ENCODE measurements at regions of chr12 and their contacts with region 1.

Region 1: DNA sequence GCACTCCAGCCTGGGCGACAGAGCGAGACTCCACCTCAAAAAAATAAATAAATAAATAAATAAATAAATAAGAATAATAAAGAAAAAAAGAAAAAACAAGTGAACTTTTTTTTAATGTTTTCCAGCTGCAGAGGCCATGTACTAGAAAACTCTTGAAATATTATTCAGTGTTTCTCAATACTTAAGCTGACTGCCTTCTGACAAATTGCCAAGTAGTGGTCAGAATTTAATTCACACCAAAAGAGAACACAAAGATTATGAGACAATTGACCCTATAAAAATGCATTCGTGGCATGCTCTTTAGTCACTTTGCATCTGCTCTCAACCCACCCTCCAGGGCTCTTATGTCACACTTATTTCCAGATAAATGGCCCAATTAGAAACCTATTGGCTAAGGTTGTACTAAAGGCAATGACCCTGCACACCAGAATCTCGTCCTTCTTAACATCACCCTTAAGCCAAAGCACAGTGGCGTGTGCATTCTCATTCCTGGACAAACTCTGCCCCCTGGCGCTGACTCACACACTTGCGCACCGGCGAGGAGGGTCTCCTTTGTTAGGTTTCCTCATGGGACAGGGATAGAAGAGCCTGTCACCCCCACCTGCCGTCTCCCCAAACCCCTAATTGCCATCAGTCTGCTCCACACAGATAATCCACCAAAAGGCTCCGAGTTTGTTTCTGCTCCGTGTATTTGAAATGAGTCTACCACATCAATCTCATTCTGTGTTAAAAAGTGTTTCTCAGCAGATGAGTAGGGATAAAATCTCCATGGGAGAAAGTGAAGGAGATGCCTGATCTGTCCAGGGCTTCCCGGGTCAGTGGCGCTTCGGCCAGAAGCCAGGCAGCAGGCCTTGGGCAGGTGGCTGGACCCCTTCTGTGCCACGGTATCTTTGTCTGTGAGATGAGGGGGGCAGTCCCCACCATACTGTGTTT is 73.1 kb upstream of the CEP83 start:
- DNase-seq: peak; percentile 67 to 89 (median 85)
- ATAC-seq: peak; percentile 87 to 89
- H3K4me3 ChIP-seq: no peak overlapping the region
- H3K27ac ChIP-seq: no peak overlapping the region
- H3K4me1 ChIP-seq: no peaks in the 10 kb centered on the region
- H3K27me3 ChIP-seq: no peaks in the 10 kb centered on the region

Region 2: GRCh38 chr12:94133964-94134795 is 398.6 kb before region 1 on chr12:
- intact Hi-C with region 1: loop called in 1 of 4 experiments (anchors 2 kb)
- DNase-seq: no peak
- ATAC-seq: peak; percentile 66 to 76
- H3K4me3 ChIP-seq: no peak overlapping the region
- H3K27ac ChIP-seq: no peak overlapping the region
- H3K4me1 ChIP-seq: no peaks in the 10 kb centered on the region
- H3K27me3 ChIP-seq: no peaks in the 10 kb centered on the region

Region 3: DNA sequence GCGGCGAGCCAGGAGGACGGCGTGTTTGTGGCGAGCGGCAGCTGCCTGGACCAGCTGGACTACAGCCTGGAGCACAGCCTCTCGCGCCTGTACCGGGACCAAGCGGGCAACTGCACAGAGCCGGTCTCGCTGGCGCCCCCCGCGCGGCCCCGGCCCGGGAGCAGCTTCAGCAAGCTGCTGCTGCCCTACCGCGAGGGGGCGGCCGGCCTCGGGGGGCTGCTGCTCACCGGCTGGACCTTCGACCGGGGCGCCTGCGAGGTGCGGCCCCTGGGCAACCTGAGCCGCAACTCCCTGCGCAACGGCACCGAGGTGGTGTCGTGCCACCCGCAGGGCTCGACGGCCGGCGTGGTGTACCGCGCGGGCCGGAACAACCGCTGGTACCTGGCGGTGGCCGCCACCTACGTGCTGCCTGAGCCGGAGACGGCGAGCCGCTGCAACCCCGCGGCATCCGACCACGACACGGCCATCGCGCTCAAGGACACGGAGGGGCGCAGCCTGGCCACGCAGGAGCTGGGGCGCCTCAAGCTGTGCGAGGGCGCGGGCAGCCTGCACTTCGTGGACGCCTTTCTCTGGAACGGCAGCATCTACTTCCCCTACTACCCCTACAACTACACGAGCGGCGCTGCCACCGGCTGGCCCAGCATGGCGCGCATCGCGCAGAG is 383.5 kb before region 1 on chr12:
- intact Hi-C with region 1: loop called in 3 of 4 experiments (anchors 5 kb)
- DNase-seq: peak; percentile 43 to 79 (median 74)
- ATAC-seq: peak; percentile 27 to 42
- H3K4me3 ChIP-seq: peak overlapping the region; percentile 88
- H3K27ac ChIP-seq: no peak overlapping the region
- H3K4me1 ChIP-seq: no peaks in the 10 kb centered on the region
- H3K27me3 ChIP-seq: no peaks in the 10 kb centered on the region

Region 4: DNA sequence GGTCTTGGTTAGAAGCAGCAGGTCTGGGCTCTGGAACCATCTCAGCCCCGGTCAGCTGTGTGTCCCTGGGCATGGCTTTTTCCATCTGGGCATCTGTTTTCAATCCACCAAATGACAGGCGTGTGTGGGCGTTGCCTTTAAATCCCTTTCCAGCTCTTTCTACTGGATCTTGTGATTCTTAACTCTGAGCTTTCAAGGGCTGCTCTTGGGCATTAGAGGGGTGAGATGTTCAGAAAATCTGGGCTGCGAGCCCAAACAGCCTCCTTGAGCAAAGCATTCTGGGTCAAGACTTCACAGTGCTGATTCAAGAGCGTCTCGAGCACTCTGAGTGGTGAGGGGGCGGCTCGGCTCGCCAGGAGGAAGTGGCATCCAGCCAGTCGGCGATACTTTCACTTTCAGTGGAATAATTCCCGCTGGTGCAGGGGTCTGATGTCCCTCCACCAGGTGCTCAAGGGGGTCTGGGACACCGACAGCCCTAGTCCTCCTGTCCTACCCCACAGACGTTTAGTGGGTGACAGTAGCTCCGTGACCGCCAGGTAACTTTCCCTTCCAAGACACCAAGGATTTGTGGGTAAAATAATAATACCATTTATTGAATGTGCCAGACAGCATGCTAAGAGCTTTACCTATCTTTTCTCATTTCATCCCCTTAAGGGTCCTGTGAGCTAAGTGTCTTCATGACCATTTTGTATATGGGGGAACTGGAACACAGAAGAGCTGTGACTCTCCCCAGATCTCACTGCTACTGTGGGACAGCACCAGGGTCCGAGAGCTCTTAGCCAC is 270.3 kb before region 1 on chr12:
- intact Hi-C with region 1: no loop called
- DNase-seq: peak; percentile 90 to 95 (median 93)
- ATAC-seq: peak; percentile 95 to 96
- H3K4me3 ChIP-seq: peak overlapping the region; percentile 60
- H3K27ac ChIP-seq: peak overlapping the region; percentile 73
- H3K4me1 ChIP-seq: peaks cover 8% of the 10 kb centered on the region
- H3K27me3 ChIP-seq: no peaks in the 10 kb centered on the region

Region 5: DNA sequence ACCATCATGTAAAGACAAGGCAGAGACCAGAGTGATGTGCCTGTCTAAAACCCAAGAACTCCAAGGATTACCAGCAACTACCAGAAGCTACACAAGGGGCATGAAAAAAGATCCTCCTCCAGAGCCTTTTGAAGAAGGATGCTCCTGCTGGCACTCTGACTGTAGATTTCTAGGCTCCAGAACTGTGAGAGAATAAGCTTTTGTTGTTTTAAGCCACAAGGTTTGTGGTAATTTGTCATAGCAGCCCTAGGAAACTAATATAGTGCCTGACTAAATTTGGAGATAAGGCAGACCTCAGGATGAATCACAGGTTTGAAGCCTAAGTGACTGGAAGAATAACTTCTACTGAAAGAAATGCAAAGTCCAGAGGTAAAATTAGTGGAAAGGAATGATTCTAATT is 206.0 kb before region 1 on chr12:
- intact Hi-C with region 1: loop called in 2 of 4 experiments (anchors 10 kb)
- DNase-seq: no peak
- ATAC-seq: no peak
- H3K4me3 ChIP-seq: no peak overlapping the region
- H3K27ac ChIP-seq: no peak overlapping the region
- H3K4me1 ChIP-seq: no peaks in the 10 kb centered on the region
- H3K27me3 ChIP-seq: no peaks in the 10 kb centered on the region

Region 6: GRCh38 chr12:94435511-94435927 is 97.2 kb before region 1 on chr12:
- intact Hi-C with region 1: no loop called
- DNase-seq: no peak
- ATAC-seq: peak; percentile 41 to 44
- H3K4me3 ChIP-seq: no peak overlapping the region
- H3K27ac ChIP-seq: no peak overlapping the region
- H3K4me1 ChIP-seq: no peaks in the 10 kb centered on the region
- H3K27me3 ChIP-seq: no peaks in the 10 kb centered on the region

Region 7: DNA sequence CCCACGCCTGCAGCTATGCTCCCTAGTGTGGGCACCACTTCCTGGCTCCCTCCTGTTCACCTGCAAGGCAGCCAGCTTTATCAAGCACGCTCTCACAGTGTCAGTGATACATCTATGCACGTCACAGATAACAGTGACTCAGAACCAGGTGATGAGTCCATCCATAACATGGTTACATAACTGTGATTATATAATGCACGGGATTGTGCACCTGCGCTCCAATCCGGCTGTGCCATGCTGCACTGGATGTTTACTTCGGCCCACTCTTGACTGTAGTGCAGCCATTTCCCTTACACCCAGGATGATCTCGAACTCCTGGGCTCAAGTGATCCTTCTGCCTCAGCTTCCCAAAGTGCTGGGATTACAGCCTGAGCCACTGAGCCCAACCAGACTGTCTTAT is 34.7 kb before region 1 on chr12:
- intact Hi-C with region 1: no loop called
- DNase-seq: no peak
- ATAC-seq: no peak
- H3K4me3 ChIP-seq: no peak overlapping the region
- H3K27ac ChIP-seq: no peak overlapping the region
- H3K4me1 ChIP-seq: peaks cover 1% of the 10 kb centered on the region
- H3K27me3 ChIP-seq: no peaks in the 10 kb centered on the region

Region 8: DNA sequence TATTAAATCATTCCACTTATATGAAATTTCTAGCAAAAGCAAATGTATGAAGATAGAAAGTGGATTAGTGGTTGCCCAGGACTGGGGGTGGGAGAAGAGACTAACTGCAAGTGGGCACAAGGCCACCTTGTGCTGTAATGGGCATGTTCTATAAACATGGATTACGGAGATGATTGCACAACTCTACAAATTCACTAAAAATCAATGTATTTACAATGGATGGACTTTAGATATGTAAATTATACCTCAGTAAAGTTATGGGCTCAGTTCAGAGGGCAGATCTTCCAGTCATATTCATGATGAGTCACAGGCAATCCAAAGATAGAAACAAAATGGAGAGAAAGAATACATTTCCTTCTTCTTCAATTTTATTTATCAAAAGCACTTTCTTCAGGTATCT is 296.8 kb after region 1 on chr12:
- intact Hi-C with region 1: no loop called
- DNase-seq: no peak
- ATAC-seq: no peak
- H3K4me3 ChIP-seq: no peak overlapping the region
- H3K27ac ChIP-seq: no peak overlapping the region
- H3K4me1 ChIP-seq: no peaks in the 10 kb centered on the region
- H3K27me3 ChIP-seq: no peaks in the 10 kb centered on the region

Measured in right cardiac atrium (tissue), 5 donors.